Ovary (tissue), 10 donors: ENCODE measurements at regions of chr16 and their contacts with region 1.

Region 1: GRCh38 chr16:27625050-27625697 is 75.2 kb downstream of the KATNIP start:
- DNase-seq: no peak
- H3K4me3 ChIP-seq: no peak overlapping the region
- H3K27ac ChIP-seq: no peak overlapping the region
- H3K4me1 ChIP-seq: peaks cover 16% of the 10 kb centered on the region
- H3K27me3 ChIP-seq: no peaks in the 10 kb centered on the region
- CTCF ChIP-seq: no peak
- EP300 ChIP-seq: no peak
- POLR2A ChIP-seq: no peak

Region 2: GRCh38 chr16:27529962-27530361 is 95.2 kb before region 1 on chr16:
- intact Hi-C with region 1: loop called in 1 of 4 experiments (anchors 10 kb)
- DNase-seq: no peak
- H3K4me3 ChIP-seq: no peak overlapping the region
- H3K27ac ChIP-seq: no peak overlapping the region
- H3K4me1 ChIP-seq: no peaks in the 10 kb centered on the region
- H3K27me3 ChIP-seq: no peaks in the 10 kb centered on the region
- CTCF ChIP-seq: no peak
- EP300 ChIP-seq: no peak
- POLR2A ChIP-seq: no peak